Tibial artery (tissue), 4 donors: ENCODE measurements at regions of chr6 and their contacts with region 1.

Region 1: DNA sequence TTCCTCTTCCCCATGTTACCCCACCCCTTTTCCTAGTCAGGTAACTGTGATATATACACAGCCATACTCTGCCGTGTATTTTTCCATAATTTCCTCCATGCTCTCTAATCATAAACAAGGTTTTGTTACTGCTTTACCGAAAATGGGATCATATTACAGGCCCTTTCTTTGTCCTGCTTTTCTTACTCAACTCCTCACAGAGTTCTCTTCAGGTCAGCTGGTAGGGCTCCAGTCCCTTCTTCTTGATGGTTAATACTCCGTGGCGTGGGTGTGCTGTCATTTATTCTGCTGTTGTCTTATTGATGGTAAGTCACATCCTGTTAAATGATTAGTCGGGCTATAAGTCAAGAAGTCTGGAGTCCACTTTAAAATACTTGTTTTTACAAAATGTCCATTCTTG is 24.9 kb upstream of the PI16 start:
- DNase-seq: no peak
- H3K4me3 ChIP-seq: no peak overlapping the region
- H3K27ac ChIP-seq: no peak overlapping the region
- H3K4me1 ChIP-seq: peaks cover 0 to 28% (median 16%) of the 10 kb centered on the region in 4 donors
- H3K27me3 ChIP-seq: no peaks in the 10 kb centered on the region
- CTCF ChIP-seq: no peak

Region 2: GRCh38 chr6:37391120-37391519 is 461.5 kb after region 1 on chr6:
- intact Hi-C with region 1: loop called (anchors 5 kb)
- DNase-seq: no peak
- H3K4me3 ChIP-seq: no peak overlapping the region
- H3K27ac ChIP-seq: no peak overlapping the region
- H3K4me1 ChIP-seq: no peaks in the 10 kb centered on the region
- H3K27me3 ChIP-seq: no peaks in the 10 kb centered on the region
- CTCF ChIP-seq: no peak